CD8-positive, alpha-beta T cell (primary cell): ENCODE measurements at regions of chr1 and their contacts with region 1.

Region 1: DNA sequence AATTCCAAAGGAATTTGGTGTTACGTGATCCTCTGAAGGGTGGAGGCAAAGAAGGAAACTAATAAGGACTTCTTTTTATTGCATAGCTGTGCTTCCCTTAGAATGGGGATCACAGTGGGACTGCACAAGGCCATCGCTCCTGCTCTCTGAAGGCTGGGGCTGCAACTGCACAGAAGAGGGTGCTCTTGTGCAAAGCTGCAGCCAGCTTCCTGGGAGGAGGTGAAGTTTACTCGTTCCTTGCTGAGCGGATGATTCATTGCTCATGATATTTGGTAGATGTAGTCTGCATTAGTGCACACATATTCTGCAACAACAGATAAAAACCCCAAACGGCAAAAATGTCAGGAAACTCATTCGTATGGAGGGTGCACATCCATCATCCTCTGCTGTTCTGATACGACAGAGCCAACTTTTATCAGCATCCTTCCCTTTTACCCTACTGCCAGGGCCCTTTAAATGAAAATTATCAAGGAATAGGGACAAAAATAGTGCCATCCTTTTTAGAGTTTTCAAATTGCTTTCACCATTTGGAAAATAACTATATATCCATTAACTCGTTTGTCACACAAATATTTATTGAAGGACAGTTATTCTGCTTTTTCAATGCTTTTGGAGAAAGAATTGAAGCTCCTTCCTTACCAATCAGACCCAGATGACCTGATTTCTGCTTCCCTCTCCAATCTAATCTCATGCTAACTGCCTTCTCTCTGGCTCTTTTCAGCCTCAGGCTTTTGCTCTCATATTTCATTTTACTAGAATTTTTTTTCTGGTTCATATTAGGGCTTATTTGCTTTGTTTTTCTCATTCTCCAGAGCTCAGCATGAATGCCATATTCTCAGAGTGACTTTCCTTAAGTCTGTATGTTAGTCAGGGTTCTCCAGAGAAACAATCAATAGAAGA is 263.6 kb downstream of the DUSP10 start:
- DNase-seq: peak; percentile 16 to 74 (median 51)
- ATAC-seq: peak; percentile 69
- H3K4me3 ChIP-seq: no peak overlapping the region
- H3K4me3 Mint-ChIP-seq: no peak overlapping the region
- H3K27ac ChIP-seq: no peak overlapping the region
- H3K27ac Mint-ChIP-seq: no peak overlapping the region
- H3K4me1 ChIP-seq: no peaks in the 10 kb centered on the region
- H3K4me1 Mint-ChIP-seq: peaks cover 2% of the 10 kb centered on the region
- H3K27me3 ChIP-seq: peaks cover 0 to 2% of the 10 kb centered on the region in 2 experiments
- H3K27me3 Mint-ChIP-seq: peaks cover 6% of the 10 kb centered on the region
- CTCF ChIP-seq: peak; percentile 29

Region 2: DNA sequence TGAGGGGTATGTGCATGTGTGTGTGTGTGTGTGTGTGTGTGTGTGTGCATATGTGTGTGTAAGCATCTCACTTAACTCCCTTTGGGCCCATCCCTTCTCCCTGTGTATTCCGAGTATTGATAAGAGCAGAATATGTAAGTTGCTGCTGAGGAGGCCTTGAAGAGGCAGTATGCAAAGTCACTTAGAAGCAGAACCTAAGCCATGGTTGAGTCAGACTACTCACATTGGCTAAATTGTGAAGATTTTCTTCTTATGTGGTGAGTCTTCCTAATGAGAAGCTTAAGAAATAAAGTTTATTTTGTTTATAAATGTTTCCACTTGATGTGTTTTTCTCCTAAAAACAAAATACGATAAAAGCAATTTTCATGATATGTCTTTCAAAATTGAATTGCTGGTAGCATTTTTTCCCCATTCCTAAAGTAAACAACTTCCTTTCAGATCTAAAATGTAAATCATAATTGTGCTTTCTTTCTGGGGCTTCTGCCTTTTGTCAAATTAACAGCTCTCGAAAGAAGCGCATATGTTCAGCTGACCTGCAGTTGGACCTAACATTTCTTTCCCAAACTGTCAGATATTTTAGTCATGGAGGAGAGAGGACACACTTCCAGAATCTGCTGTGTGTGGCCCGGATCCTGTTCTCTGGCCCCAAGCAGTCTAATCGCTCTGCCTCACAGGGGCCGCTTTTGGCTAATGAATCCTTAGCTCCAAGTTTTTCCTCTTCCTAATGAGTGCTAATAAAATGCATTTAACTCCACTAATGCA is 20.4 kb before region 1 on chr1:
- CTCF ChIA-PET with region 1: no interaction called
- POLR2A ChIA-PET with region 1: no interaction called
- intact Hi-C with region 1: no loop called
- DNase-seq: no peak
- ATAC-seq: no peak
- H3K4me3 ChIP-seq: no peak overlapping the region
- H3K4me3 Mint-ChIP-seq: no peak overlapping the region
- H3K27ac ChIP-seq: no peak overlapping the region
- H3K27ac Mint-ChIP-seq: no peak overlapping the region
- H3K4me1 ChIP-seq: no peaks in the 10 kb centered on the region
- H3K4me1 Mint-ChIP-seq: no peaks in the 10 kb centered on the region
- H3K27me3 ChIP-seq: peaks cover 0 to 2% of the 10 kb centered on the region in 2 experiments
- H3K27me3 Mint-ChIP-seq: peaks cover 3% of the 10 kb centered on the region
- CTCF ChIP-seq: no peak

Region 3: GRCh38 chr1:221637641-221638041 is 159.3 kb after region 1 on chr1:
- CTCF ChIA-PET with region 1: no interaction called
- POLR2A ChIA-PET with region 1: no interaction called
- intact Hi-C with region 1: no loop called
- DNase-seq: no peak
- ATAC-seq: no peak
- H3K4me3 ChIP-seq: no peak overlapping the region
- H3K4me3 Mint-ChIP-seq: no peak overlapping the region
- H3K27ac ChIP-seq: no peak overlapping the region
- H3K27ac Mint-ChIP-seq: no peak overlapping the region
- H3K4me1 ChIP-seq: no peaks in the 10 kb centered on the region
- H3K4me1 Mint-ChIP-seq: no peaks in the 10 kb centered on the region
- H3K27me3 ChIP-seq: no peaks in the 10 kb centered on the region
- H3K27me3 Mint-ChIP-seq: no peaks in the 10 kb centered on the region
- CTCF ChIP-seq: no peak

Region 4: GRCh38 chr1:221858818-221859611 is 380.7 kb after region 1 on chr1:
- CTCF ChIA-PET with region 1: no interaction called
- POLR2A ChIA-PET with region 1: no interaction called
- intact Hi-C with region 1: loop called in 1 of 2 experiments (anchors 5 kb)
- DNase-seq: no peak
- ATAC-seq: no peak
- H3K4me3 ChIP-seq: no peak overlapping the region
- H3K4me3 Mint-ChIP-seq: no peak overlapping the region
- H3K27ac ChIP-seq: no peak overlapping the region
- H3K27ac Mint-ChIP-seq: no peak overlapping the region
- H3K4me1 ChIP-seq: no peaks in the 10 kb centered on the region
- H3K4me1 Mint-ChIP-seq: no peaks in the 10 kb centered on the region
- H3K27me3 ChIP-seq: no peaks in the 10 kb centered on the region
- H3K27me3 Mint-ChIP-seq: no peaks in the 10 kb centered on the region
- CTCF ChIP-seq: no peak

Region 5: DNA sequence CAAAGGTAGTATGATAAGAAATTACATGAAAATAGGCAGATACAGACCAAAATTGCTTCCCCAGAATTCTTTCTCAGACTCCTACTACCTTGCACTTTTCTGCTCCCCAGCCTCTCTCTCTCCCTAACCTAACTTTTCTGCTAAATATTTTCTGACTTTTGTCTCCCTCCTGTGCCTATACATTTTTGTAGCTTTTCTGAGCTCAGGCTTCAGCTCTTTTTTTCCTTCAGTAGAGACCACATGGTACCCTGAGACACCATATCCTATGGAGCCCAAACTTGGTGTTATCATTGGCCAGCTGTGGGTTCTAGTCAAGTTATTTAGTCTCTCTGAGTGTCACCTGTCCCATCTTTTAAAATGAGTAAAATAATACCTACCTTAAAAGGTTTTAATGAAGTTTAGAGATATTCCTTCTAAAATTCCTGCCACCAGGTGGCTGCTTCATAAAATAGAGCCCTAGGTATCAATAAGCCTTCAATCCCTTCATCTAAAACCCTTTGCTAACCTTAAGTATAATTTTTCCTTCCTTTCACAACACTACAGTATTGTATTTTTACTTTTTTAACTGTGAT is 501.2 kb after region 1 on chr1:
- CTCF ChIA-PET with region 1: interaction called, 5 read pairs
- POLR2A ChIA-PET with region 1: no interaction called
- intact Hi-C with region 1: loop called in 1 of 2 experiments (anchors 1 kb)
- DNase-seq: peak in 2 of 9 experiments; percentile 2 to 7
- ATAC-seq: no peak
- H3K4me3 ChIP-seq: no peak overlapping the region
- H3K4me3 Mint-ChIP-seq: no peak overlapping the region
- H3K27ac ChIP-seq: no peak overlapping the region
- H3K27ac Mint-ChIP-seq: no peak overlapping the region
- H3K4me1 ChIP-seq: no peaks in the 10 kb centered on the region
- H3K4me1 Mint-ChIP-seq: no peaks in the 10 kb centered on the region
- H3K27me3 ChIP-seq: no peaks in the 10 kb centered on the region
- H3K27me3 Mint-ChIP-seq: peaks cover 7% of the 10 kb centered on the region
- CTCF ChIP-seq: no peak

Region 6: DNA sequence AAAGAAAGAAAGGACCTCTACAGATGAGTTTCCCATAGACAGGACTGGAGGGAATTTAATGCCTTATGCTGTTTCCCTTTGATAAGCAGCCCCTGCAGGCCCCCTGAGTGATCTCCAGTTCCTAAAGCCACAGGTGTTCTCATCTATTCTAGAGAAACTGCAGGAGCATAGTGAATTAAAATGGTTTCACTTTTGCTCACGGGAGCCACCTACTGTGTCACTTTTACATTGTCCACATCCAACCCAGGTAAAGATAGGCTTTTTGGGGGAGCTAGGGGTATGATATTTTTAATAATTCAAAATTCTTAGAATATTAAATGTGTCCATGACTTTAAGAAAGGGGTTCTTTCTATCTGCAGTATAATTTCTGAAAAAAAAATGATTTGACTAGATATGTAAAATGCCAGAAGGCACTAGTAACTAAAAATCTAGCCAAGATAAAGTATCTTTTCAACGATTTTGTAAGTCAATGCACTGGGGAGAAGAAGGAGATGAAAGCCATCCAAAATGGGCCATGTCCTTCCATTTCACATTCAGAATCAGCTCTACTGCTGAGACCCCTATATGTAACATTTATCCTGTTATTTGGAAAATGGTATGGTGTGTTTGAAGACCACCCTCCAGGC is 530.9 kb after region 1 on chr1:
- CTCF ChIA-PET with region 1: interaction called, 22 read pairs
- POLR2A ChIA-PET with region 1: no interaction called
- intact Hi-C with region 1: loop called (anchors 1 kb)
- DNase-seq: peak in 8 of 9 experiments; percentile 3 to 65 (median 17)
- ATAC-seq: peak; percentile 57
- H3K4me3 ChIP-seq: no peak overlapping the region
- H3K4me3 Mint-ChIP-seq: no peak overlapping the region
- H3K27ac ChIP-seq: no peak overlapping the region
- H3K27ac Mint-ChIP-seq: no peak overlapping the region
- H3K4me1 ChIP-seq: no peaks in the 10 kb centered on the region
- H3K4me1 Mint-ChIP-seq: no peaks in the 10 kb centered on the region
- H3K27me3 ChIP-seq: no peaks in the 10 kb centered on the region
- H3K27me3 Mint-ChIP-seq: no peaks in the 10 kb centered on the region
- CTCF ChIP-seq: peak; percentile 60

Region 7: DNA sequence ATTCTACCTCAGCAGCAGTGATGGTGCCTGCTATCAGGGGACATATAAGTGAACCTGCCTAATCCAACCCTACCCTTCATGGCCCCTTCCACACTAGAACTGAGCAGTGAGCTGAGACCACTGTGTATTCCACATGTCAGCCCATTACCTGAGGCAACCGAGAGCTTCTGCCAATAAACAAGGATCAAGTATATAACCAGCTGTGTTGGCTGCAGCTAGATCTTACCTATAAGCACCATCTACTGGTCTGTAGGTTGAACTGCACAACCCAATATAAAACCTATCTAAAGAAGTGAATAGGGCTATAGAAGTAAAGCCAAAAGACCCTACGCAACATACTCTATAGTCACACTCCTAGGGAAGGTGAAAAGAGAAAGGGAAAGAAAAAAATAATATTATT is 692.7 kb after region 1 on chr1:
- CTCF ChIA-PET with region 1: no interaction called
- POLR2A ChIA-PET with region 1: no interaction called
- intact Hi-C with region 1: loop called in 1 of 2 experiments (anchors 5 kb)
- DNase-seq: peak in 2 of 9 experiments; percentile 18 to 37
- ATAC-seq: no peak
- H3K4me3 ChIP-seq: no peak overlapping the region
- H3K4me3 Mint-ChIP-seq: no peak overlapping the region
- H3K27ac ChIP-seq: no peak overlapping the region
- H3K27ac Mint-ChIP-seq: no peak overlapping the region
- H3K4me1 ChIP-seq: no peaks in the 10 kb centered on the region
- H3K4me1 Mint-ChIP-seq: no peaks in the 10 kb centered on the region
- H3K27me3 ChIP-seq: peaks cover 0 to 3% of the 10 kb centered on the region in 2 experiments
- H3K27me3 Mint-ChIP-seq: peaks cover 5% of the 10 kb centered on the region
- CTCF ChIP-seq: no peak